PC-9 (cell line): ENCODE measurements at regions of chr4 and their contacts with region 1.

Region 1: GRCh38 chr4:39977489-39978377 is at the start of gene PDS5A:
- DNase-seq: peak; percentile 72 to 93
- H3K4me3 ChIP-seq: peak within 1 kb of the TSS; percentile 93
- H3K27ac ChIP-seq: peak within 1 kb of the TSS; percentile 72
- H3K4me1 ChIP-seq: peaks cover 18% of the 10 kb centered on the region
- H3K27me3 ChIP-seq: no peaks in the 10 kb centered on the region
- CTCF ChIP-seq: peak; percentile 73
- total RNA-seq, gene PDS5A: 78.9 and 86.4 TPM in 2 replicates

Region 2: GRCh38 chr4:38759113-38759789 is 1218.5 kb before region 1 on chr4:
- CTCF ChIA-PET with region 1: no interaction called
- POLR2A ChIA-PET with region 1: no interaction called
- intact Hi-C with region 1: loop called (anchors 10 kb)
- DNase-seq: peak in 1 of 2 experiments; percentile 36
- H3K4me3 ChIP-seq: no peak overlapping the region
- H3K27ac ChIP-seq: no peak overlapping the region
- H3K4me1 ChIP-seq: no peaks in the 10 kb centered on the region
- H3K27me3 ChIP-seq: no peaks in the 10 kb centered on the region
- CTCF ChIP-seq: peak; percentile 86

Region 3: DNA sequence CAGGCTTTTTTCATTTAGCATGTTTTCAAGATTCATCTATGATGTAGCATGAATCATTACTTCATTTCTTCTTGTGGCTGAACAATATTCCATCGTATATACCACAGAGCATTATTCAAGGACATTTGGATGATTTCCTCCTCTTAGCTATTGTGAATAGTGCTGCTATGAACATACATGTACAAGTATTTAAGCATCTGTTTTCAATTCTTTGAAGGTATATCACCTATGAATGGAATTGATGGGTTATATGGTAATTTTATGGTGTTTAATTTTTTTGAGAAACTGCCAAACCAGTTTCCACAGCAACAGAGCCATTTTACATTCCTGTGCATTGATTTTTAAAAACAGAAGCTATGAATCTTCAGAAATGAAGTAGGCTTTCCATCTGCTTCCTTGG is 831.5 kb before region 1 on chr4:
- CTCF ChIA-PET with region 1: no interaction called
- POLR2A ChIA-PET with region 1: no interaction called
- intact Hi-C with region 1: loop called (anchors 10 kb)
- DNase-seq: no peak
- H3K4me3 ChIP-seq: no peak overlapping the region
- H3K27ac ChIP-seq: no peak overlapping the region
- H3K4me1 ChIP-seq: peaks cover 6% of the 10 kb centered on the region
- H3K27me3 ChIP-seq: no peaks in the 10 kb centered on the region
- CTCF ChIP-seq: no peak

Region 4: GRCh38 chr4:39469429-39470077 is 508.2 kb before region 1 on chr4:
- CTCF ChIA-PET with region 1: no interaction called
- POLR2A ChIA-PET with region 1: no interaction called
- intact Hi-C with region 1: loop called (anchors 1 kb)
- DNase-seq: peak; percentile 52 to 77
- H3K4me3 ChIP-seq: no peak overlapping the region
- H3K27ac ChIP-seq: peak overlapping the region; percentile 65
- H3K4me1 ChIP-seq: peaks cover 9% of the 10 kb centered on the region
- H3K27me3 ChIP-seq: no peaks in the 10 kb centered on the region
- CTCF ChIP-seq: peak; percentile 93

Region 5: GRCh38 chr4:39697740-39698423 is 279.9 kb before region 1 on chr4 and contains the start of gene UBE2K:
- CTCF ChIA-PET with region 1: no interaction called
- POLR2A ChIA-PET with region 1: no interaction called
- intact Hi-C with region 1: loop called (anchors 1 kb)
- DNase-seq: peak; percentile 73 to 91
- H3K4me3 ChIP-seq: peak within 1 kb of the TSS; percentile 78
- H3K27ac ChIP-seq: peak within 1 kb of the TSS; percentile 71
- H3K4me1 ChIP-seq: peaks cover 31% of the 10 kb centered on the region
- H3K27me3 ChIP-seq: no peaks in the 10 kb centered on the region
- CTCF ChIP-seq: no peak
- total RNA-seq, gene UBE2K: 89.4 and 129 TPM in 2 replicates

Region 6: DNA sequence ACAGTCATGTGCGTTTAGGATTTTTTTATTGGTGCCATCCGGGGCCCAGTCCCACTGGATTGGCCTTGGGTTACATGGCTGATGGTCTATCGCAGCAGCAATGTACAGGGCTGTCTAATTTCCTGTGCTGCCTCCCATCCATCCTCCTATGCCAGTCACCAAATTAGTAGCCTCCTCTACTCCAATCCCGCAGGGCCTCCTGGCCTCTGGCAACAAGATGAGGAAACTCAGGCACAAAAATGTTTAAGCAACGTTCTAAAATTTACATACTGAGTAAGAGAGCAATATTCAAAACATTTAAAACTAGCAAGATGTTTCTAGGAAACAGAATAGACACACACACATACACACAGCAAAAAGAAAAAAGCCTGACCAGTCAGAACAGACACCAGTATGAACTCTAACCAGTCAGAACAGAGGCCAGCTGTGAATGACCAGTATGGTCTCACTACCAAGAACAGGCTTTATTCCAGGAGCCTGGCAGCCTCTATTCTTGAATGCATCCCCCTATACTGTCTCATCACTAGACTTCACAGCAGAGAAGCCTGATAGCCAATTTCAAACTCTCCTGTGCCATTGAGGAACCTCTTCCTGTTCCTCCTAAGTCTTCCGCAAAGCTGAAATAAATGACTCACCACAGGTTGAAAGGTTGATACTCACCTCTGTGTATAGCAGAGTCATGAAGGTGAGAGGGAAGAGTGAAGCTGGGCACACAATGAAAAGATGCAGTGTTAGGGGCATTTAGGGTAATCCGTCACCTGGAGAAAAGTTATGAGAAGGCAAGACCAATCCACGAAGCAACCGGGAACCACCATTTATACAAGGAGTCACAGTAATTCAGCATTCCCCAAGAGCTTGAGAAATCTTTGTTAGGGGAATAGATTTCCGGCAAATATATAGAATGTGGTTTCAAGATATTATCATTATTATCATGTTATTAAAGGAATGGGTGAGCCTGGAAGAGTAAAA is 400.1 kb after region 1 on chr4:
- CTCF ChIA-PET with region 1: no interaction called
- POLR2A ChIA-PET with region 1: interaction called, 12 read pairs
- intact Hi-C with region 1: no loop called
- DNase-seq: peak; percentile 55 to 89
- H3K4me3 ChIP-seq: no peak overlapping the region
- H3K27ac ChIP-seq: peak overlapping the region; percentile 85
- H3K4me1 ChIP-seq: peaks cover 33% of the 10 kb centered on the region
- H3K27me3 ChIP-seq: no peaks in the 10 kb centered on the region
- CTCF ChIP-seq: no peak